Activated CD8-positive, alpha-beta T cell treated with anti-CD3 and anti-CD28 coated beads, Interleukin-2, amount 10 ng/mL, durations not matched to agents 7 days and 5 days (primary cell): ENCODE measurements at regions of chr14 and their contacts with region 1.

Region 1: DNA sequence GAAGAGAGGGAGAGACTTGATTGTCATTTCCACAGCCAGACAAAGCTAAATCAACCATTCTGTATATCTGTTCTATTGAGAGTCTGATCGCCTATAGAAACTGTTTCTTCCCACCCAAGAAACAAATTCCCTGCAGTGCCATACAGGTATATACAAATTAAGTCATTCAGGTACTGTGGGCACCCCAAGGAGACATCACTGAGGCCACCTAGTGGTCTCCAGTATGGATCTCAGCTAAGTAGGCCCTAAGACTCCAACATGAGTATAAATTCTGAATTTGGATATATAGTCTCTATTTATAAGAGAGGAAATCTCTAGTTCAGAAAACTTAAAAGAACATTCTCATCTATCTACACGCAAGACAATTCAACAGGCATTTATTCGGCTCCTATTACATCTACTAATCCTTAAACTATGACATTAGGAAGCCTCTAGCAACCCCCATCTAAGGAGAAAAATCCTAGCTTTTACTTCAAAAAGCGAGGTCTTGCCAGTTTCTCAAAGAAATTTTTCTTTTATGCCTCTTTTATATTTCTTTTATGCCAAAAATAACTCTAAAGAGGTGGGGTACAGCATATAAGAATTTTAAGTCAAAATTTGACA is 62.6 kb downstream of the DCAF5 start:
- DNase-seq: peak; percentile 51
- ATAC-seq: peak; percentile 47
- H3K4me3 Mint-ChIP-seq: no peak overlapping the region
- H3K27ac Mint-ChIP-seq: no peak overlapping the region
- H3K4me1 Mint-ChIP-seq: peaks cover 12% of the 10 kb centered on the region
- H3K27me3 Mint-ChIP-seq: no peaks in the 10 kb centered on the region

Region 2: GRCh38 chr14:69079183-69079742 is 11.0 kb before region 1 on chr14:
- CTCF ChIA-PET with region 1: interaction called, 18 read pairs
- POLR2A ChIA-PET with region 1: no interaction called
- DNase-seq: no peak
- ATAC-seq: no peak
- H3K4me3 Mint-ChIP-seq: no peak overlapping the region
- H3K27ac Mint-ChIP-seq: no peak overlapping the region
- H3K4me1 Mint-ChIP-seq: no peaks in the 10 kb centered on the region
- H3K27me3 Mint-ChIP-seq: no peaks in the 10 kb centered on the region

Region 3: GRCh38 chr14:69101331-69101826 is 11.1 kb after region 1 on chr14:
- CTCF ChIA-PET with region 1: interaction called, 13 read pairs
- POLR2A ChIA-PET with region 1: no interaction called
- DNase-seq: peak; percentile 28
- ATAC-seq: peak; percentile 68
- H3K4me3 Mint-ChIP-seq: no peak overlapping the region
- H3K27ac Mint-ChIP-seq: peak overlapping the region; percentile 13
- H3K4me1 Mint-ChIP-seq: peaks cover 5% of the 10 kb centered on the region
- H3K27me3 Mint-ChIP-seq: no peaks in the 10 kb centered on the region